ENCODE measurements at regions of chr14 and their contacts with region 1.

Region 1: GRCh38 chr14:35404449-35405303 is at the start of gene NFKBIA:
- DNase-seq: peak; percentile 88 to 95 (median 91)
- H3K4me3 ChIP-seq: peak within 1 kb of the TSS; percentile 95
- H3K27ac ChIP-seq: peak within 1 kb of the TSS; percentile 96 to 99
- H3K4me1 ChIP-seq: peaks cover 15% of the 10 kb centered on the region
- H3K27me3 ChIP-seq: no peaks in the 10 kb centered on the region
- CTCF ChIP-seq: peak; percentile 7 to 44 (median 20)
- EP300 ChIP-seq: no peak
- POLR2A ChIP-seq: peak; percentile 97
- total RNA-seq, gene NFKBIA: 162 to 1,807 (median 236) TPM

Region 2: GRCh38 chr14:35292051-35292769 is 112.5 kb before region 1 on chr14 and contains the start of gene PSMA6:
- intact Hi-C with region 1: loop called in 2 of 4 experiments (anchors 2 to 10 kb)
- DNase-seq: peak; percentile 98 to 99 (median 98)
- H3K4me3 ChIP-seq: peak within 1 kb of the TSS; percentile 84
- H3K27ac ChIP-seq: peak within 1 kb of the TSS; percentile 15 to 49
- H3K4me1 ChIP-seq: peaks cover 5% of the 10 kb centered on the region
- H3K27me3 ChIP-seq: no peaks in the 10 kb centered on the region
- CTCF ChIP-seq: no peak
- EP300 ChIP-seq: no peak
- POLR2A ChIP-seq: peak; percentile 54
- total RNA-seq, gene PSMA6: 85.2 to 157 (median 102) TPM

Region 3: DNA sequence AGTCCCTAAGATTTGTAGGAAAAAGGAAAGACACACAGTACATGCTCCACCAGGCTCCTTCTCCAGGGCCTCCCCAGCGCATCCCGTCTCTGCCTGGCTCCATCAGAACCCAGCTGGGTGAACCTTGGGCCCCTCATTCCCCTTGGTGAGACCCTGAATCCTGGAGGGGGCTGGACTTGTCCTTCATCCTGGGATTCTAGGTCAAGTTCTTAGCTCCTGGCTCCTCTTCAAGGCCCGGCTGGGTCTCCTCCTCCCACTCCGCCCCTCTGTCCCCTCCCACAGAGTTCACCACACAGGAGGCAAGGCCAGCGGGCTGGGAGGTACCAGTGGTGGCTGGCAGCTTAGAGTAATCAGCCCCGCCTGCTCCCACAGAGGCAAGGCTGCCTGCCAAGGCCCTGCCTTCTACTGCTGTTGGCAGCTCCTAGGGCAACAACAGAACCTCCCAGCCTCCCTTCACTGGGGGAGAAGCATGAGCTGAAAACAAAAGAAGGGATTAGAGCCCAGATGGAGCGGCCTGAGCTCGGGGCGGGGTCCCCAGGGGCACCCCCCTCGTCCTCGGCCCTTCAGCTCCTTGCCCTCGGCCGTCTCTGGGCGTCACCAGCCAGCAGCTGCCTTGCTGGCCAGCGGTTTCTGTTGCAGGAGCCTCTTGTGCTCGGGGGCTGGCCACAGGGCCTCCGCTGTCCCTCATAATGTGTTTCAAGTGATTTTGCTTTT is 63.1 kb before region 1 on chr14:
- intact Hi-C with region 1: loop called (anchors 1 to 5 kb)
- DNase-seq: peak; percentile 91 to 96 (median 94)
- H3K4me3 ChIP-seq: peak overlapping the region; percentile 3
- H3K27ac ChIP-seq: peak overlapping the region; percentile 67 to 87
- H3K4me1 ChIP-seq: peaks cover 37% of the 10 kb centered on the region
- H3K27me3 ChIP-seq: no peaks in the 10 kb centered on the region
- CTCF ChIP-seq: no peak
- EP300 ChIP-seq: no peak
- POLR2A ChIP-seq: peak; percentile 6

Region 4: GRCh38 chr14:35826218-35826951 is 421.7 kb after region 1 on chr14 and contains the start of gene BRMS1L:
- intact Hi-C with region 1: loop called in 1 of 4 experiments (anchors 10 kb)
- DNase-seq: peak; percentile 97 to 98 (median 98)
- H3K4me3 ChIP-seq: peak within 1 kb of the TSS; percentile 98
- H3K27ac ChIP-seq: peak within 1 kb of the TSS; percentile 95 to 100
- H3K4me1 ChIP-seq: no peaks in the 10 kb centered on the region
- H3K27me3 ChIP-seq: no peaks in the 10 kb centered on the region
- CTCF ChIP-seq: peak in 1 of 3 donors; percentile 35
- EP300 ChIP-seq: no peak
- POLR2A ChIP-seq: peak; percentile 95
- total RNA-seq, gene BRMS1L: 4.0 to 10.6 (median 9.8) TPM